ENCODE measurements at regions of chr1 and their contacts with region 1.

Region 1: DNA sequence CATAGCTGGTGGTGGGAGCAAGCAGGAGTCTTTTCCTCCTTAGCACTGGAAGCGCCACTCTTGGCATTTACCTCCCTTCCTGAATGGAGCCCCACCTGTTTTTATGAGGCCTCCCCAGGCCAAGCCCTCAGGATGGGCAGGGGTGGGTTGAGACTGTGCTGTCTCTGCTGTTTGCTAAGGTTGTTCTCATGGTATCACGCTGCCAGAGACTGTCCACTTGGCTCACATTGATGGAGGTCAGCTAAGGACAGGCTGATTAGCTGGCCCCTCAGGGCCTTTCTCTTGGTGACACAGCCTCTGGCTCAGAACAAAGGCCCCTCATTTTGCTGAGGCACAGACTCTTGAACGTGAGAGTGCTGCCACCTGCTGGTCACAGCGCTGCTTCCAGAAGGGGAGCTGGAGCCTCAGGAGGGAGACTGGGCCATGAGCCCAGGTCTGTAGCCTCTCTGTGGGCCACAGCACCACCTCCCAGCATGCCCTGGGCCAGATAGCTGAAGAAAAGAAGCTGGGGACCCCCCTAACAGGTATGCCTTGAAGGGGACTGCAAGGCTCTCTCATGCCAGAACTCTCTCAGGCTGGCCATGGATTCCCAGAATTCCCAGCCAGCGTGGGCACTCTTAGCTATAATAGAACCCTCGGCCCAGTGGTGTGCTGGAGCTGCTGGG is 85.6 kb downstream of the CD58 start:
- DNase-seq: peak; percentile 94
- H3K4me3 Mint-ChIP-seq: no peak overlapping the region
- H3K27ac Mint-ChIP-seq: no peak overlapping the region
- H3K4me1 Mint-ChIP-seq: no peaks in the 10 kb centered on the region
- H3K27me3 Mint-ChIP-seq: no peaks in the 10 kb centered on the region

Region 2: GRCh38 chr1:116139592-116140134 is 345.5 kb before region 1 on chr1:
- CTCF ChIA-PET with region 1: interaction called, 396 read pairs
- intact Hi-C with region 1: loop called (anchors 1 kb)
- DNase-seq: no peak
- H3K4me3 Mint-ChIP-seq: no peak overlapping the region
- H3K27ac Mint-ChIP-seq: no peak overlapping the region
- H3K4me1 Mint-ChIP-seq: peaks cover 7% of the 10 kb centered on the region
- H3K27me3 Mint-ChIP-seq: no peaks in the 10 kb centered on the region

Region 3: GRCh38 chr1:116168277-116169097 is 316.7 kb before region 1 on chr1:
- CTCF ChIA-PET with region 1: interaction called, 23 read pairs
- intact Hi-C with region 1: no loop called
- DNase-seq: peak; percentile 88
- H3K4me3 Mint-ChIP-seq: peak overlapping the region; percentile 74
- H3K27ac Mint-ChIP-seq: no peak overlapping the region
- H3K4me1 Mint-ChIP-seq: peaks cover 8% of the 10 kb centered on the region
- H3K27me3 Mint-ChIP-seq: no peaks in the 10 kb centered on the region

Region 4: GRCh38 chr1:116360429-116361173 is 124.6 kb before region 1 on chr1:
- CTCF ChIA-PET with region 1: interaction called, 31 read pairs
- intact Hi-C with region 1: loop called (anchors 1 kb)
- DNase-seq: no peak
- H3K4me3 Mint-ChIP-seq: no peak overlapping the region
- H3K27ac Mint-ChIP-seq: no peak overlapping the region
- H3K4me1 Mint-ChIP-seq: peaks cover 25% of the 10 kb centered on the region
- H3K27me3 Mint-ChIP-seq: no peaks in the 10 kb centered on the region

Region 5: DNA sequence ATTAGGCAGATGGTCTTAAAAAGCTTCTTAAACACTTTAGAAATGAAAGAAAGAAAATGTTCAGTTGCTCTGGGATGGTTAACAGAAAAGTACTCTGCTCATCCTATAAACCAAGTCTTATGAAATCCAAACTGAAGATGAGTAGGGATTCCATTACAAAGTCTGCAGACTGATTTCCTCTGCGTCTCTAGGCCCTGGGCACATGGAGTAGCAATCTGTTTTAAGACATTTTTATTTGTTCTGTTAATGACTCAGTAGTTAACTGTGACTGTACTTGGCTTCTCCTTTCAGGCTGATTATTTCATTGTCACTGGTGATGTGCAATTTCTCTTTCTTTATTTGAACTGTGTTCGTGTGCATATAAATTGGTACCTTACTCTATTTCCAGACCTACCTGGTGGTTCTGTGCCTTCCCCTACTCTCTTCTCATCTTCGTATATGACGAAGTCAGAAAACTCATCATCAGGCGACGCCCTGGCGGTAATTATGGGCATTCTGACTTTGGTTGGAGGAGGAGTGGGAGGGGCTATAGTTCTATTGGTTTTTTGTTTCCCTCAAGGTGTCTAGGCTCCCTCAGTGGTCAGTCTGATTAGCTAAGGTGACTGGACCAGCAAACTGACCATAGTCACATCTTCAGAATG is 81.6 kb before region 1 on chr1:
- CTCF ChIA-PET with region 1: interaction called, 12 read pairs
- intact Hi-C with region 1: no loop called
- DNase-seq: no peak
- H3K4me3 Mint-ChIP-seq: no peak overlapping the region
- H3K27ac Mint-ChIP-seq: peak overlapping the region; percentile 20
- H3K4me1 Mint-ChIP-seq: peaks cover 30% of the 10 kb centered on the region
- H3K27me3 Mint-ChIP-seq: no peaks in the 10 kb centered on the region

Region 6: DNA sequence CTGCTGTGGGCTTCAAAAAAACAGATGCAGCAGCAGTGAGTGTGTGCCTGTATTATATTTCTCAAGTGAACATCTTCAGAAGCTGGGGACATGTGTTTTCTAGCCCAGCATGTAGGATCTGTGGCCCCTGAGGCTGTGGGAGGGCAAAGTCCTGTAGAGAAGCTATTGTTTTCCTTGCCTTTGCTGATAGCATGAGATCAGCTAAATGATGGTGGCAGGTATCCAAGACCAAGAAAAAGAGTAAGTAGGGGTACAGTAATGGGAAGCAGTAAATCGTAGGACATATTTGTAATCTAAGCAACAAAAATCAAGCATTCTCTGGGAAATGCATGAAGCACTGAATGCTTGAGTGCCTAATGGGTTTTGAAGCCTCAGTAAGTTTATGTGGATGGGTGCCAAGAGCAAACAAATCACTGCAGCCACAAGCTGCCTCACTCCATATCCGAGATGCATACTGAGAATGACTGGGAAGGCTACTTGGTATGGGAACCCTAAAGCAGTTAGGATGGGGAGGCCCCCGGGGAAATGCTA is 12.7 kb before region 1 on chr1:
- CTCF ChIA-PET with region 1: interaction called, 18 read pairs
- intact Hi-C with region 1: no loop called
- DNase-seq: no peak
- H3K4me3 Mint-ChIP-seq: no peak overlapping the region
- H3K27ac Mint-ChIP-seq: no peak overlapping the region
- H3K4me1 Mint-ChIP-seq: no peaks in the 10 kb centered on the region
- H3K27me3 Mint-ChIP-seq: no peaks in the 10 kb centered on the region